Lower lobe of right lung (tissue), 2 donors: ENCODE measurements at regions of chr10 and their contacts with region 1.

Region 1: DNA sequence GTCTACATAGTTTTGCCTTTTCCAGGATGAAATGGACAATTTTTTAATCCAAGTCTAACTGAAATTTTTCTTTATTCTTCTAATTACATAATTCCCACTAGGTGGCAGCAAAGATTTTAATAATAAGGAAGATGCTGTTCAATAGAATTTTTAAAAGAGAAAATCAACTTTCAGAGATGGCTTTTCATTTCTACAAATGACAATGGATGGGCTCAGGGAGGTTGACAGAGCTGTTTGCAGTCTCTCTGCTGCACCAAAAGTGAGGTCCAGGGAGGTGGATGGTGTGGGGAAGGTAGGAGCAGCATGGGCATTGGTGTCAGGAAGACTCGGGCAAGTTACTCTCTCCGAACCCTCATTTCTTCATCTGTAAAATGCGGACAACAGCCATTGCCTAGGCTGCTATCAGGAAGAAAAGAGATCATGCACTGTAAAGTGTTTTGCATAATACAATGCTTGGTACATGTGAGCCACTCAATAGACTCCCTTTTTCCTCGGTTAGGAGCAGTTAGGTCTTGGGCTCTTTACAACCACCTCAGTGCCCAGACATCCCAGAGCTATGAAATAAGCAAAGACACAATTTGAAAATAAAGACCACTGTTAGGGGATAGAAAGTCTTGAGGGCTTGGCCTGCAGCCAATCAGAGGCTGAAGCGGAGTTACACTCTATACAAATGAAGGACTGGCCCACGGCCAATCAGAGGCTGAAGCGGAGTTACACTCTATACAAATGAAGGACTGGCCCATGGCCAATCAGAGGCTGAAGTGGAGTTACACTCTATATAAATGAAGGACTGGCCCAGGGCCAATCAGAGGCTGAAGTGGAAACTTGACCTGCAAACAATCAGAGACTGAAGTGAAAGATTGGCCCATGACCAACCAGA is 107.1 kb downstream of the ABLIM1 start:
- DNase-seq: peak; percentile 78
- ATAC-seq: peak; percentile 66 to 77
- H3K4me3 ChIP-seq: peak overlapping the region; percentile 31
- H3K27ac ChIP-seq: peak overlapping the region; percentile 62
- H3K4me1 ChIP-seq: peaks cover 19% of the 10 kb centered on the region
- H3K27me3 ChIP-seq: no peaks in the 10 kb centered on the region
- CTCF ChIP-seq: peak; percentile 52

Region 2: GRCh38 chr10:114261116-114261515 is 289.9 kb before region 1 on chr10:
- intact Hi-C with region 1: no loop called
- DNase-seq: no peak
- ATAC-seq: peak in 1 of 2 donors; percentile 46
- H3K4me3 ChIP-seq: no peak overlapping the region
- H3K27ac ChIP-seq: peak overlapping the region; percentile 39
- H3K4me1 ChIP-seq: peaks cover 44% of the 10 kb centered on the region
- H3K27me3 ChIP-seq: no peaks in the 10 kb centered on the region
- CTCF ChIP-seq: no peak

Region 3: DNA sequence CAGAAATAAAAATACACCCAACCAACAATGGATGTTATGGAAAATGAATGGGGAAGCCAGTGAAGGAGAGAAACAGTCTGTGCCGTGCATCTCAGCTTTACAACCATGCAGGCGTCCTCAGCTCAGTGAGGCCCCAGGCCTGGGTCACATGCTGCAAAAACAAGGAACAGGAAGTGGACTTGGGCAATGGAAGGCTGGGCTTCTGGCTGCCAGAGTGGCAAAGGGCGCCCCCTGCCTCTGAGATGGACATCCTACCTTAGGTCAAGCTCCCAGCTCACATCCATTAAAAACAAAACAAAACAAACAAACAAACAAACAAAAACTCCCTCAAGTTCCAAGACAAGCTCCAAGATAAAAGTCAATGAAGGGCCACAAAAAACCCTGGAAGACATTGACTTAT is 92.0 kb before region 1 on chr10:
- intact Hi-C with region 1: no loop called
- DNase-seq: peak; percentile 65
- ATAC-seq: peak; percentile 62 to 79
- H3K4me3 ChIP-seq: no peak overlapping the region
- H3K27ac ChIP-seq: no peak overlapping the region
- H3K4me1 ChIP-seq: no peaks in the 10 kb centered on the region
- H3K27me3 ChIP-seq: no peaks in the 10 kb centered on the region
- CTCF ChIP-seq: peak; percentile 54

Region 4: DNA sequence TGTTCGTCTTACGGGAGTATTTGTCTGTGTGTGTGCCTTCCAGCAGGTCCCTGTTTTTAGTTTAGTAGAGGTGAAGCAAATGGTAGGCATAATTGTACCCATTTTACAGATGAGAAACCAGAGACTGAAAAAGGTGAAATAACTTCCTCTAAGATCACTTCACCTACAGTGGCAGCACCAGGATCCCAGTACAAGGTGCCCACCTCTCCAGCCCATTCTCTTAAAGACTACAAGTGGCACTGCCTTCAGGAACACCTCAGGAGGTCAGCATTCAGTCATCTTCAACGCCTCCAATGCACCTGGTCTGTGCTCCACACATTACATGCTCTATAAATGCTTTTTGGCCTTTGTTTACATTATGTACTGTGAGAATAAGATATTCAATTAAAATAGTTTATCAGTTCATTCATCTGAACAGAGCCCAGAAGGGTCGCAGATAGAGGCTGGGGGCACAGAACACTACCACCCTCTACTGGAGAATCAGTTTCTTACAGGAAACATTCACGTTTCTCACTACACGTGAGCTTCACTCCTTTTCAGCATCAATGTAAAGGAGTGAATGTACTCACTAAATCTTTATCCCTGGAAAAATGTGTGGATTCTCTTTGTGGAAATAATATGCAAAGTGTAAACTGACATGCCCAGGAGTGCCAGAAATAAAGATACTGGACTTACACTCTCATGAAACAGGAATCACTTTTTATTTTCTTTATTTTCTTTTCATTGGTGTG is 152.5 kb after region 1 on chr10:
- intact Hi-C with region 1: loop called (anchors 5 kb)
- DNase-seq: no peak
- ATAC-seq: peak; percentile 38 to 71
- H3K4me3 ChIP-seq: no peak overlapping the region
- H3K27ac ChIP-seq: no peak overlapping the region
- H3K4me1 ChIP-seq: no peaks in the 10 kb centered on the region
- H3K27me3 ChIP-seq: no peaks in the 10 kb centered on the region
- CTCF ChIP-seq: peak; percentile 70